Lower leg skin (tissue), 4 donors: ENCODE measurements at regions of chr17 and their contacts with region 1.

Region 1: GRCh38 chr17:58352014-58352842 is at the start of gene SUPT4H1:
- DNase-seq: peak; percentile 86 to 97
- H3K4me3 ChIP-seq: peak within 1 kb of the TSS; percentile 98
- CTCF ChIP-seq: no peak
- POLR2A ChIP-seq: peak in 1 of 2 donors; percentile 83
- total RNA-seq, gene SUPT4H1: 49.5 to 89.7 (median 57.5) TPM

Region 2: GRCh38 chr17:58289869-58290268 is 62.4 kb before region 1 on chr17:
- intact Hi-C with region 1: no loop called
- DNase-seq: peak in 1 of 2 donors; percentile 73
- H3K4me3 ChIP-seq: no peak overlapping the region
- CTCF ChIP-seq: no peak
- POLR2A ChIP-seq: no peak

Region 3: DNA sequence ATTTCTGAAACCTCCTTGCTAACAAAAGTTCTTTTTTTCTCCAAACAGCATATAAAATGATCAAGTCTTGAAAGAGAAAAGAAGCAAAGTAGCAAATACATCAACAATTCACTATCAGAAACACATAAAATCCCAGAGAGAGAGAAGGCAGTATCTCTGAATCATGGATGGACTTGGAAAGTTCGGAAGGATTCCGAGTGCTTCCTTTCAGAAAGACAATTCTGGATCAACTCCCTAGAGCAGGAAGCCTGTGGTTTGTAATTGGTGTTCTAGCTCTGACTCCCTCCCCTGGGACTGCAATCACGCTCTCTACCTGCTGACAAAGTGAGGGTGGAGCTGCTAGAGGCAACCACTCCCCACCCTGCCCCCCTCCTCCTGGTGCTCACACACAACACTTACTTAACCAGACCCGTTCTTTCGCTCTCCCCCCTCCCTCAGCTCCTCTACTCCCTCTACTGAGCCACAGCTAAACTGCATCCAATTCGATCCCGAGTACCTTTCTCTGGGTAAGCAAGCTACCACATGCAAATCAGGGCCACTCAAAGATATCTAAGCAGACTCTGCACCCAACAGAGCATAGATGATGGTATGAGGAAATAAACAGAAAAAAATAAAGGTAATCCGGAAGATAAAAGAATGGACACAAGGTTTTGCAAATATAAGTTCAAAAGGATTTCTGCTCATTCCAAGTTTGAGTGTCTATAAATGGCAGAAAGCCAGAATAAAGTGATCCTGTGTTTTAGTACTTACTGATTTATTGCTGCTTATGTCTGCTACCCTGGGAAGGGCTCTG is 65.3 kb after region 1 on chr17 and contains the start of gene RNF43:
- intact Hi-C with region 1: loop called (anchors 5 kb)
- DNase-seq: peak; percentile 93 to 95
- H3K4me3 ChIP-seq: no peak within 1 kb of the TSS
- CTCF ChIP-seq: peak in 1 of 3 donors; percentile 88
- POLR2A ChIP-seq: no peak
- total RNA-seq, gene RNF43: 11.0 to 20.0 (median 18.4) TPM